Calu3 (cell line): ENCODE measurements at regions of chr20 and their contacts with region 1.

Region 1: DNA sequence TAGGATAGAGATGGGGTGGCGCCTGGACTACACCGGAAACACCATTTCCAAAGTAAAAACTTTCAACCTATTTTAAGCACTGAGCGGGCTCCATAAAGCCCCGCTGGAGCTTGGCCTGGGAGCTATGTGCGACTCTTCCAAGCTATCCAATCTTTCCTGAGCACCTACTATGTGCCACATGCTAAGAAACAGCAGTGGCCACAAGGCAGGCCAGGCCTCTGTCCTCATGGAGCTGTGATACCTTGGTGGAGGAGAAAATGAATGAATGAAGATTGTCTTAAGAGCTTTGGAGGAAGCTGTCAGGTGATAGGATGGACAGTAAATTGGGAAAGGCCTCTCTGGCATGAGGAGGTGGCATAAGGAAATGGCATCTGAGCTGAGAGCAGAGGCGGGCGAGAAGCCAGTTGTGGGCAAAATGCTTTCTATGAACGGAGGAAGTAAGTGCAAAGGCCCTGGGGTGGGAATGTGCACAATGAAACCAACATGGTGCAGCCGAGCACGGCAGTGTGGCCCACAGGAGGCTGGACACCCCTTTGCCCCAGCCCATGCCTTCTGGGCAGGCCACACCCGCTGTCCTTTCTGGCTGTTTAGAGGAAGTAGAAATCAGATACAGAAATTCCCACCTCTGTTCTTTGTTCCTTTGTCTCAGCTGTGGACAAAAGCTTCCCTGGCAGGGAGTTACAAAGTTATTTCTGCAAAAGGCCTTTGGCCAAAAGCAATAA is 12.1 kb downstream of the SULF2 start:
- DNase-seq: peak; percentile 73
- H3K4me3 Mint-ChIP-seq: peak overlapping the region; percentile 64
- H3K27ac Mint-ChIP-seq: peak overlapping the region; percentile 81
- H3K4me1 Mint-ChIP-seq: peaks cover 34% of the 10 kb centered on the region
- H3K27me3 Mint-ChIP-seq: no peaks in the 10 kb centered on the region
- CTCF ChIP-seq: no peak

Region 2: DNA sequence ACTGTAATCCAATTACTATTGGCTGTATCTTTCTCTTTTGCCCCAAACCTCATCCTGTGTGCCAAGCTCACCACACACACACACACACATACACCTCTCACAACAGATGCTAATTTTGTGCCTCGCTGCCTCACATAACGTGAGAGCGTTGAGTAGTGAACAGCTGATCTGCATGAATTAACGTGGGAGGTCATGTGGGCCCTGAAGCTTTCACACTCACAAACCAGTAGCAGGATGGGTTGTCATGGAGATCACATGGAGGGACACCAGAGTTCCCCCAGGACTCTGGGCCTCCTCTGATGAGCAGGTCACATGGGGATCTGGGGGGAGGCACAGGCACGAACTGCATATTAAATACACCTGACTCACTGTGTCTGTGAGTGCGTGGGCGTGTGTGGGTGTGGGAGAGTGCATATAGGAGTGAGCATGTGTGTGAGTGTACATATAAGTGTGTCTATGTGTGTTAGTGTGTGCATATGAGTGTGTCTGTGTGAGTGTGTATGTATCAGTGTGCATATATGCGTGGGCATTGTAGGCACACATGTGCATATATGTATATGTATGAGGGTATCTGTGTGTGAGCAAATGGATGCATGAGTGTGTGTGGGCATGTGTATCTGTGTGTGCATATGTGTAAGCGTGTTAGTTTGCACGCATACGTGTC is 74.8 kb after region 1 on chr20:
- CTCF ChIA-PET with region 1: interaction called, 14 read pairs
- intact Hi-C with region 1: no loop called
- DNase-seq: no peak
- H3K4me3 Mint-ChIP-seq: no peak overlapping the region
- H3K27ac Mint-ChIP-seq: no peak overlapping the region
- H3K4me1 Mint-ChIP-seq: peaks cover 33% of the 10 kb centered on the region
- H3K27me3 Mint-ChIP-seq: no peaks in the 10 kb centered on the region
- CTCF ChIP-seq: no peak

Region 3: DNA sequence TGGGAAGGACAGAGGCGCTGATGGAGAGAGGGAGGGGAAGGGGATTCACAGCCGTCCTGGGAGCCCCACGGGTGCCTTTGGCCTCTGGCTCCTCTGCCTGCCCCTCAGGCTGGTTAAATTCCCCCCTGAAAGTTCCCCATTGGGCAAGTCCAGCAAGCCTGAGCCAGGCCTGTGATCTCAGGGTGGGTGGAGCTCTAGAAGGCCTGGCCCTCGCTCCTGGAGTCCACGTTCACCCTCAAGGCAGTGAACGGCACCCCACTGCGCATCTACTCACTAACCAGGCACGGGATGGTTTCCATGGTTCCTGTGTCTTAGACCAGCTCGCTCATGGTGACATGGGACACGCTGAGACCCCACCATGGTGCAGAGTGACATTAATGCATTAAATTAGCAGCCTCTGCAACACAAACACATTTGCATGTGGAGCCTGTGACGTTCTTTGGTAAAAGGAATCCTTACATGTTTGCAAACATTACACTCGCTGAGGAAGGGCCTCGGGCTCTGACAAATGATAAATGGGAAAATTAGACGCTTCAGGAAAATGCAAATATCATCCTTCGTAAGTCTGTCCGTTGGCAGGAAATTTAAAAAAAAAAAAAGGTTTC is 601.9 kb after region 1 on chr20:
- CTCF ChIA-PET with region 1: no interaction called
- intact Hi-C with region 1: loop called (anchors 5 kb)
- DNase-seq: no peak
- H3K4me3 Mint-ChIP-seq: peak overlapping the region; percentile 68
- H3K27ac Mint-ChIP-seq: peak overlapping the region; percentile 99
- H3K4me1 Mint-ChIP-seq: peaks cover 83% of the 10 kb centered on the region
- H3K27me3 Mint-ChIP-seq: no peaks in the 10 kb centered on the region
- CTCF ChIP-seq: no peak